Activated B cell treated with CpG ODN at 0.5 μM for 24 hours (primary cell): ENCODE measurements at regions of chr7 and their contacts with region 1.

Region 1: DNA sequence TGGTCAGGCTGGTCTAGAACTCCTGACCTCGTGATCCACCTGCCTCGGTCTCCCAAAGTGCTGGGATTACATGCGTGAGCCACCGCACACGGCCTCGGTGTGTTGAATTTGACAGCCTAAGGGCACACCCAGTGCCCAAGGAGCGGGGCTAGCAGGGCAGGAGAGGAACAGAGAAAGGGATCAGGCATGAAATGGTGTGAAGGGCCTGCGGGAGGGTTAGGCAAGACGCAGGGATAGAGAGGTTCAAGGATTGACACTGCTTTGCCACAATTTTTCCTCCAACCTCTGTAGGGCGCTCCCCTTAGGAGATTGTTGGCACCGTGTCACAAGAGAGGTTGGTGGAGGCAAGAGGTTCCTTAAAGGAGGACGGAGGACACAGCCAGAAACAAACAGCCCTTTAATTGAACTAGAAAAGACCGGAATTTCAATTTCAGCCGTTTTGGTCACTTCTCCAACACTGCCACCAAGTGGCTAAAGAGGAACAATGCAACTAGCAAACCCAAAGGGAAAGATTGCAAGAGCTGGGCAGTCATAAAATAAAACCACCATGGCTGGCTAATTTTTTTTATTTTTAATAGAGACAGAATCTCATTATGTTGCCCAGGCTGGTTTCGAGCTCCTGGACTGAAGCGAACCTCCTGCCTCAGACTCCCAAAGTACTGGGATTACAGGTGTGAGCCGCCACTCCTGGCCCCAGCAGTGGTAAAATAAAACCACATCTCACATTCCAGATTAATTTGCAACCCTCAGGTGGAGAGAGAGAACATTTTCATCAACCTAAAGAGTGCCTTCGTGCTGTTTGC is 6.9 kb upstream of the CREB3L2 start:
- DNase-seq: no peak
- ATAC-seq: peak; percentile 75
- H3K4me3 Mint-ChIP-seq: no peak overlapping the region
- H3K27ac Mint-ChIP-seq: no peak overlapping the region
- H3K4me1 Mint-ChIP-seq: peaks cover 5% of the 10 kb centered on the region
- H3K27me3 Mint-ChIP-seq: no peaks in the 10 kb centered on the region
- CTCF ChIP-seq: peak; percentile 19

Region 2: GRCh38 chr7:137606061-137606674 is 402.6 kb before region 1 on chr7:
- CTCF ChIA-PET with region 1: no interaction called
- POLR2A ChIA-PET with region 1: no interaction called
- intact Hi-C with region 1: loop called (anchors 1 kb)
- DNase-seq: no peak
- ATAC-seq: no peak
- H3K4me3 Mint-ChIP-seq: no peak overlapping the region
- H3K27ac Mint-ChIP-seq: no peak overlapping the region
- H3K4me1 Mint-ChIP-seq: no peaks in the 10 kb centered on the region
- H3K27me3 Mint-ChIP-seq: no peaks in the 10 kb centered on the region
- CTCF ChIP-seq: no peak

Region 3: DNA sequence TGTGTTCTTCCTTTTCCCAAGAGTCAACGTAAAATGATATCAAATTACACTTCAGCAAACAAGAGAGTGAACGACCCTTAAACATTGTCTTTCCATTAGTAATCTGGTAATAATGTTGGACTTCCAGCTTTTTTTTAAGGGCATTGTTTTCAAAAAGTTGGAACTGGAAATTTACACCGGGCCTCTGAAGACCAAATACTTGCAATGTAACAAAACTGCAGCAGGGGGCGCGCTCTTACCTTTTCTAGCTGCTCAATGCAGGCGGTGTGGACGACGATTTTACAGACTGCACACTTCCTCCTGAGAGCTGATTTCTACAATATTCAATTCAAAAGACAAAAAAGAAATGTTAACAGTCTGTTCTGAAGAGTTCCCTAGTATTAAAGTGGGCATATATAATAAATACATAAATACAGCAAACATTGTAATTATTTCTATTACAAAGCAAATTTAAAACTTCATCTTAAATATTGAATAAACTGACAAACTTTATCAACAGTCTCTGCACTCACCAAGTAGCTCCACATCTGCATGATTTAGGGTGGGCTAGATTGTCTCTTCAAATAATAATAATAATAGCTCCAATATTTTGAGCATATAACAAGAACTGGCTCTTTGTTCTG is 352.4 kb before region 1 on chr7:
- CTCF ChIA-PET with region 1: interaction called, 11 read pairs
- POLR2A ChIA-PET with region 1: no interaction called
- intact Hi-C with region 1: no loop called
- DNase-seq: peak; percentile 24
- ATAC-seq: peak; percentile 28
- H3K4me3 Mint-ChIP-seq: no peak overlapping the region
- H3K27ac Mint-ChIP-seq: no peak overlapping the region
- H3K4me1 Mint-ChIP-seq: no peaks in the 10 kb centered on the region
- H3K27me3 Mint-ChIP-seq: peaks cover 2% of the 10 kb centered on the region
- CTCF ChIP-seq: peak; percentile 84